Right lobe of liver (tissue), 6 donors: ENCODE measurements at regions of chr18 and their contacts with region 1.

Region 1: DNA sequence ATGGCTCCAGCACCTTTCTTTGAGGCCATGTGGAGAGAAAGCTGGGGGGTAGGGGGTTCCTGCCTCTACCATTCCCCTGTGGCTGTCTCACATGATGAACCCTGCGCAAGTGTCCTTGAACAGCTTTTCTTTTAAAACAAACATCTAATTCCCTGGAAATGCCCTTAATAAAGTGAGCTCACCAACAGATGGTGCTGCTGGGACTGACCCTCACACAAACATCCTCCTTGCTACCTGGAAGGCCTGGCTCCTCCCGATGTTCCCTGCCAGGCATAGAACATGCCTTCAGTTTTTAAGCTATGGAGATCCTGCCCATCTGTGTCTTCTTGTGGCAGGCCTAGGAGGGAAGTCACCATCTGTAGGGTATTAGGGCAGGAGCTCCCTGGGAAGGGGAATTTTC is 60.7 kb upstream of the GATA6 start:
- DNase-seq: peak in 2 of 3 donors; percentile 26 to 42
- ATAC-seq: peak; percentile 40 to 56 (median 51)
- H3K4me3 ChIP-seq: no peak overlapping the region
- H3K27ac ChIP-seq: no peak overlapping the region
- H3K4me1 ChIP-seq: peaks cover 0 to 15% (median 1%) of the 10 kb centered on the region in 4 donors
- H3K27me3 ChIP-seq: no peaks in the 10 kb centered on the region
- CTCF ChIP-seq: peak; percentile 16 to 46 (median 36)
- POLR2A ChIP-seq: no peak

Region 2: GRCh38 chr18:21933931-21934765 is 174.5 kb before region 1 on chr18:
- intact Hi-C with region 1: no loop called
- DNase-seq: no peak
- ATAC-seq: no peak
- H3K4me3 ChIP-seq: no peak overlapping the region
- H3K27ac ChIP-seq: no peak overlapping the region
- H3K4me1 ChIP-seq: no peaks in the 10 kb centered on the region
- H3K27me3 ChIP-seq: no peaks in the 10 kb centered on the region
- CTCF ChIP-seq: no peak
- POLR2A ChIP-seq: no peak

Region 3: DNA sequence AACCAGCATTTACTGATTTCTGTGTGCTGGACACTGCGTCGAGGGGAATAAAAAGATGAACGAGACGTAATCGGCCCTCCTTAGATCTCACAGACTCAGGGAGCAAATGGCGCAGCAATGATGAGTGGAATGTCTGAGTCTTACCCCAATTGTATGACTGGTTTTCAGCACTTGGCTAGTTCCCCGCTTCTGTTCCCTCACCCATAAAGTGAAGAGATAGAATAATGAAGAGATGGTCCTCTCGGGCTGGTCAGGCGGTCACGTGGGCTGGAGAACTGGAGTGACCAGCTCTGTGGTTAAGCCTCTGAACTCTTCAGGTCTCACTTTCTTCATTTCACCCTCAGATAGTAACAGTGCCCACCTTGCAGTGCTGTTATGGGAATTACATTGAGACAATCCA is 43.5 kb after region 1 on chr18:
- intact Hi-C with region 1: loop called in 1 of 2 experiments (anchors 10 kb)
- DNase-seq: no peak
- ATAC-seq: no peak
- H3K4me3 ChIP-seq: no peak overlapping the region
- H3K27ac ChIP-seq: no peak overlapping the region
- H3K4me1 ChIP-seq: no peaks in the 10 kb centered on the region
- H3K27me3 ChIP-seq: no peaks in the 10 kb centered on the region
- CTCF ChIP-seq: no peak
- POLR2A ChIP-seq: no peak